Prostate gland (tissue), 2 donors: ENCODE measurements at regions of chr10 and their contacts with region 1.

Region 1: DNA sequence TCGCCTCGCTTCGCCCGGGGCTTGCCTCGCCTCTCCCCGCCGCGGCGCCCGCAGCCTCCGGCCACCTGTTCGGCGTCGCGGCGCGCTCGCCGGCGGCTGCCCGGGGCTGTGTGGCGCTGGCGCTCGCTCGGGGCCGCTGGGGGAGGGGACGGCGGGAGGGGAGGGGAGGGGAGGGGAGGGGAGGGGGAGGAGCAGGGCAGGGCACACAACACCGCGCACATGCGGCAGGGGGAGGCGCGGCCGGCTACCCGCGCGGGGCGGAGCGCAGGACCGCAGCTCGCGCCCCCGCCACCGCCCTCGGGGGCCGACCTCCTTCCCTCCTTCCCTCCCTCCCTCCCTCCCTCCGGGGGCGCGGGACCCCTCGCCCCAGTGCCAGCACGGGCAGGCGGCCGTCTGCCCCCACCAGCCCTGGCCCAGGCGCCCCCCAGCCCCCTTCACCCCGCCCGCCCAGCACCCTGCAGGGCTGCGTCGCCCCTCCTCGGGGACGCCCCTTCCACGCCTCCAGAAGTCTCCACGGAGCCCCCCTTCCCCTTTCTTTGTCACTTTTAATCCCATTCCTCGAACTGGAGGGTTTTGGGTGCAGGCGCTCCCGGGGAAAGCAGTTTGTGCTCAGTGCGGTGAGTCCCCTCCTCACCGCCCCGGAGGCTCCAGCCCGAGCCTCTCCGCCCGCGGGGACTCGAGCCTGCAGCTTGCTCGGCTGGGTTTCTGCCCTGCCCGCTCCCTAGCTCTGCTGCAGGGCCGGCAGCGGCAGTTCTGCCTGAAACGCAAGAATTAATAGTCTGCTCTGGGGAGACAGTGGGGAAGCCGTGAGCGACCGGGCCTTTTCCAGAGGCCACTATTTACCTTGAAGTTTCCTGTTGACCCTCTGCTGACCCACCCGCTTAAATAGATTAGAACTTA is at the start of gene PARD3:
- DNase-seq: peak; percentile 68
- H3K4me3 ChIP-seq: peak within 1 kb of the TSS; percentile 88 to 91
- H3K27ac ChIP-seq: peak within 1 kb of the TSS; percentile 85 to 91
- H3K4me1 ChIP-seq: peaks cover 4% of the 10 kb centered on the region
- H3K27me3 ChIP-seq: no peaks in the 10 kb centered on the region
- CTCF ChIP-seq: peak in 1 of 4 experiments; percentile 3
- POLR2A ChIP-seq: no peak
- total RNA-seq, gene PARD3: 32.0 to 61.9 TPM

Region 2: DNA sequence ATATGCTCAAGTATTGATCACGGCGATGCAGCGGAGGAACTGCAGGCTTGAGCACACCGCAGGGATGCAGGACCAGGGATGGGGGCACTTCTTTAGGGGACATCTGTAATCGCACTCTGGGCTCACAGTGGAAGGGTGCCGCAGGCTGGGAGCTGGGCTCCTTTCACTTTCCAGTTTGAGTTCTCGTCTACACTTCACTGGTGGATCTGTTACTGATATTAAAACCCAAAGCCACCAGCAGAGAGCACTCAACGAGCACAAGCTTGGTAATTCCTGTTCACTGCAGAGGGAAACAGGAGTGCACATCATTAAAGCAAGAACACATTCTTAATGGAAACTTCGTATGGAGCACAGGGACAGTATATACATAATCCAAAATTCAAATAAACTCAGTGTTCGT is 91.7 kb before region 1 on chr10:
- intact Hi-C with region 1: loop called (anchors 5 kb)
- DNase-seq: peak; percentile 33
- H3K4me3 ChIP-seq: no peak overlapping the region
- H3K27ac ChIP-seq: no peak overlapping the region
- H3K4me1 ChIP-seq: peaks cover 4% of the 10 kb centered on the region
- H3K27me3 ChIP-seq: no peaks in the 10 kb centered on the region
- CTCF ChIP-seq: peak; percentile 11 to 54 (median 44)
- POLR2A ChIP-seq: no peak

Region 3: DNA sequence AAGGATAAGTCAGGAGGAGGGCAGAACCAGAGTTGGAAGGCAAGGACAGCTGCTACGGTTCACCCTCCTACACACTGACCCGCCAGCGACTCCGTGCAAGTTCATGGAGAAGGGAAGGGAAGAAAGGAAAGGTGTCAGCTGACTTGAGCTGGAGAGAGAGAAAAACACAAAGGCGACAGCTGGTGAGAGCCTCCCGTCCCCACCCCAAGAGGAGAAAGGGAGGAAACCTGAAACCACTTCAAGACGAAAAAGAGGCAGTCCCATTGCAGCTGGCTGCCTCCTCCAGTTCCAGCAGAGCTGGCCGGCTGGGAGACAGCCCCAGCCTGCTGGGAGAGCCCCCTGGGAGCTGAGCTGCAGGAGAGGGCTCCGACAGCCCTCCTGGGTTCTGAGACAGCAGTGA is 75.5 kb before region 1 on chr10:
- intact Hi-C with region 1: loop called (anchors 5 kb)
- DNase-seq: peak; percentile 36
- H3K4me3 ChIP-seq: no peak overlapping the region
- H3K27ac ChIP-seq: peak overlapping the region in 1 of 2 donors; percentile 4
- H3K4me1 ChIP-seq: peaks cover 7% of the 10 kb centered on the region
- H3K27me3 ChIP-seq: no peaks in the 10 kb centered on the region
- CTCF ChIP-seq: no peak
- POLR2A ChIP-seq: no peak

Region 4: DNA sequence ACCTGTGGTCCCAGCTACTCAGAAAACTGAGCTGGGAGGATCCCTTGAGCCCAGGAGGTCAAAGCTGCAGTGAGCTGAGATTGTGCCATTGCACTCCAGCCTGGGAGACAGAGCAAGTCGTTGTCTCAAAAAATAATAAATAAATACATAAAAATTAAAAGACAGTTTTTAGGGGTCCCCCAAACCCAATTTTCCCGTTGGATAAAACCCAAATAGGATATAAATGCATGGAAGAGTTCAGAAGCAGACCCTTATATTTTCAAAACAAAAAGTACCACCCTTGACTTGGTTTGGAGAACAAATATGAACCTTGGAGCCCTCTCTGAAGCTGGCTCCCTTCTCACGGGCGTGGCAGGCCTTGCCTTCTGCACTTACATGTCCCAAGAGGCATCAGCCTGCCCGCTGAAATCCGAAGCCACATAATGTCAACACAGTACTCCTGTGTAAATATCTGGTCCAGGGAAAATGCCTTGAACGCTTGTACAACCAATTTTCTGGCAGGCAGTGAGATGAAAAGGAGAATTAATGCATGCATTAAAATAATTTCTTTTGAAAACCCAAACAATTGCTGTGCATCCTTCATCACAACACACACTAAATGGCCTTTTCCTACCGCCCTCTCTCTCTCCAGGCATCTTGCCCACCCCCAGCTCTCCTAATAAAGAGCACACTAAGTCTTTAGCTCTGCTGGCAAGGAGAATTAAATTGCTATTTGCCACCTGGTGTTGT is 46.0 kb after region 1 on chr10:
- intact Hi-C with region 1: loop called (anchors 5 kb)
- DNase-seq: peak; percentile 58
- H3K4me3 ChIP-seq: no peak overlapping the region
- H3K27ac ChIP-seq: no peak overlapping the region
- H3K4me1 ChIP-seq: peaks cover 9% of the 10 kb centered on the region
- H3K27me3 ChIP-seq: no peaks in the 10 kb centered on the region
- CTCF ChIP-seq: no peak
- POLR2A ChIP-seq: no peak

Region 5: DNA sequence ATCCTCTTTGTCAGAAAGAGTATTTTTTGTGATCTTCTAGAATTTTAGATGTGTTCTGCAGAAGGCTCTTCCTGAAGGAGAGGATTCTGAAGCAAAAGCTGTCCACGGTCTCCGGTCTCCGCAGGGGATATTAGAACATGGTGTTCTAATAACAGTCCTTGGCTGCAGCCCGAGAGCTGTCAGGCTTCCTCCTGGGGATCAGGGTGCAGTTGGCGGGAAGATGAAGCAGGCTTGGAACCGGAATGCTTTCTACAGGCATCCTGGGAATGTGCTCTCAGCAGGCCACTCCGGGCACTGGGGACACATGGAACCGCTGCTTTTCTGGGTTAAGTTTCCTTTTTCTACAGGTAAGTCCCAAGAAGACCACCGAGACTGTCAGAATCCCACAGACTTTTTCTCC is 118.2 kb after region 1 on chr10:
- intact Hi-C with region 1: loop called (anchors 10 kb)
- DNase-seq: peak; percentile 53
- H3K4me3 ChIP-seq: no peak overlapping the region
- H3K27ac ChIP-seq: peak overlapping the region in 1 of 2 donors; percentile 55
- H3K4me1 ChIP-seq: no peaks in the 10 kb centered on the region
- H3K27me3 ChIP-seq: no peaks in the 10 kb centered on the region
- CTCF ChIP-seq: no peak
- POLR2A ChIP-seq: no peak